ENCODE measurements at regions of chr4 and their contacts with region 1.

Region 1: GRCh38 chr4:24433515-24434214 is 150.7 kb downstream of the DHX15 start:
- DNase-seq: no peak
- ATAC-seq: no peak
- H3K4me3 ChIP-seq: no peak overlapping the region
- H3K27ac ChIP-seq: no peak overlapping the region
- H3K4me1 ChIP-seq: no peaks in the 10 kb centered on the region
- H3K27me3 ChIP-seq: peaks cover 15% of the 10 kb centered on the region
- CTCF ChIP-seq: no peak
- POLR2A ChIP-seq: no peak
- RAD21 ChIP-seq: no peak

Region 2: DNA sequence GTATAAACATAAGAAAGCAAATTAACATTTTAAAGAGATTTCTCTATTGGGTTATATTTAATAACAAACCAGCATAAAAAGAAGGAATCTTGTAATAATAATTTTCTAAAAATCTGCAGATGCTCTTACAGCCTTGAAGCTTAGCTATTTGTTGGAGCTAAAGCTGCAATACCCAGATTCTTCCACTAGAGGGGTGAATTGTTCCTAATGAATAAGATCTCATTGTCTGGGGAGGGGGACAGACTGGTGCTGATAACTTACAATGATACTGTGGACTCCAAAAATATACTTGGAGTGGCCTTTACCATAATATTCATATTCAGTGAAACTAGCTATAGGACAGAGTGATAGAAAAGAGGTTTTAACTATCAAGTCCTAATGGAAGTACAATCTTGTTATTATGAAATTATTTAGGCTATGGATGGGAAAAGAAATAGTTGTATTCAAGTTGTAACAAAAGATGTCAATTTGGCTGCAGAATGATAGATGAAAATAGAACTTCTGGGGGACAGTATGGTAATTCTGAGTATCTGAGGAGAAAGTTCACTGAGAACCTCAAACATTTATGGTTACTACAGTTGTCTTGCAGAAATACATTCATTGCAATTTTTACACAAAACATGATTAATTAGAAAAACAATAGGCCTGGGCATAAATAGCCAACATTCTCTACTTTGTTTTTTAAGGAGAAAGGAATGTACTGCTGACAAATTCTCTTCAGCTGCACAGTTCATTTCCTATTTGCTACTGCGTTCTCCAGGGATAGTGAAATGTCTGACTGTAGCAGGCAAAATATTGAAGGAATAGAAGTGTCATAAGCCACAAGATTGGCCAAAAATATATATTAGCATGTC is 1297.6 kb before region 1 on chr4:
- CTCF ChIA-PET with region 1: no interaction called
- POLR2A ChIA-PET with region 1: no interaction called
- dilution Hi-C with region 1: no loop called
- in situ Hi-C with region 1: loop called (anchors 25 kb)
- intact Hi-C with region 1: no loop called
- DNase-seq: peak; percentile 41
- ATAC-seq: 0 out of 2 replicates have a peak, but pooled peaks have one; percentile 46
- H3K4me3 ChIP-seq: no peak overlapping the region
- H3K27ac ChIP-seq: no peak overlapping the region
- H3K4me1 ChIP-seq: no peaks in the 10 kb centered on the region
- H3K27me3 ChIP-seq: no peaks in the 10 kb centered on the region
- CTCF ChIP-seq: peak; percentile 51
- POLR2A ChIP-seq: no peak
- RAD21 ChIP-seq: peak; percentile 42

Region 3: GRCh38 chr4:24117975-24118374 is 315.7 kb before region 1 on chr4:
- CTCF ChIA-PET with region 1: no interaction called
- POLR2A ChIA-PET with region 1: no interaction called
- dilution Hi-C with region 1: no loop called
- in situ Hi-C with region 1: no loop called
- intact Hi-C with region 1: no loop called
- DNase-seq: peak; percentile 28
- ATAC-seq: no peak
- H3K4me3 ChIP-seq: no peak overlapping the region
- H3K27ac ChIP-seq: no peak overlapping the region
- H3K4me1 ChIP-seq: peaks cover 2% of the 10 kb centered on the region; the same call in 1 of the 2 replicates
- H3K27me3 ChIP-seq: no peaks in the 10 kb centered on the region
- CTCF ChIP-seq: no peak
- POLR2A ChIP-seq: no peak
- RAD21 ChIP-seq: no peak

Region 4: GRCh38 chr4:24160358-24160757 is 273.3 kb before region 1 on chr4:
- CTCF ChIA-PET with region 1: no interaction called
- POLR2A ChIA-PET with region 1: no interaction called
- dilution Hi-C with region 1: no loop called
- in situ Hi-C with region 1: no loop called
- intact Hi-C with region 1: no loop called
- DNase-seq: no peak
- ATAC-seq: no peak
- H3K4me3 ChIP-seq: no peak overlapping the region
- H3K27ac ChIP-seq: no peak overlapping the region
- H3K4me1 ChIP-seq: no peaks in the 10 kb centered on the region
- H3K27me3 ChIP-seq: no peaks in the 10 kb centered on the region
- CTCF ChIP-seq: no peak
- POLR2A ChIP-seq: no peak
- RAD21 ChIP-seq: no peak

Region 5: DNA sequence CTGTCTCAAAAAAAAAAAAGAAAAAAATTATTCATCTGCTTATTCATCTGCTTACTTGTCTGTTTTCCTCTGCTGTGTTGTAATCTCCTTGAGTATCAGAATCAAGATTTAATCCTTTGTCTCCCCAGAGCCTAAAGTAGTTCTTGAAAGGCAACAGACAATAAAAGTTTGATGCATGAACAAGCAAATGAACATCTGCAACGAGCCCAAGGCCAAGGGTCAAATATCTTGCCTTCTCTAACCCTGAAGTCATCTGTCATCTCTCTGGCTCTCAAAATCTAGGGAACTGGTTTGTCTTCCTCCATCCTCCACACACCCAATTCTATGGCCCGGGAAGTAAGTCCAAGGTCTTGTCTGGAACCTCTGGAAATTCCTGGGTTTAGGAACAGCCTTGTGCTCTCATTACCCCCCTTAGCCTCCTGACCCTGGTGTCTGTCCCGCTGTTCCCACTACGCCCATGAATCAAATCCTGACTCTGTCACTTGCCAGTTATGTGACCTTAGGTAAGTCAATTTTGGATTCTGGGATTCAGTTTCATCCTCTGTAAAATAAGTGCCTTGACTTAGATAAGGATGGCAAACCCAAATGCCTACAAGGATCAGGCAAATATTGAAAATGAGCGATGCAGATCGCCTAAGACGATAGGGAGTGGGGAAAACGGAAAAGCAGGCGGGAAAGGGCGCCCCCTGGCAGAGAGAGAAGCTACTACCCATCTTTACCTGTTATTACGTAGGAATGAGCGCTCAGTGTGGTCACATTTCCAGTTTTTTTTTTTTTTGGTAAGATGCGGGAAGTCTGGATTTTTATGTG is 253.4 kb after region 1 on chr4:
- CTCF ChIA-PET with region 1: no interaction called
- POLR2A ChIA-PET with region 1: no interaction called
- dilution Hi-C with region 1: no loop called
- in situ Hi-C with region 1: no loop called
- intact Hi-C with region 1: no loop called
- DNase-seq: no peak
- ATAC-seq: no peak
- H3K4me3 ChIP-seq: no peak overlapping the region
- H3K27ac ChIP-seq: no peak overlapping the region
- H3K4me1 ChIP-seq: peaks cover 3% of the 10 kb centered on the region; the same call in 1 of the 2 replicates
- H3K27me3 ChIP-seq: peaks cover 7% of the 10 kb centered on the region
- CTCF ChIP-seq: peak; percentile 35
- POLR2A ChIP-seq: no peak
- RAD21 ChIP-seq: peak; percentile 48

Region 6: DNA sequence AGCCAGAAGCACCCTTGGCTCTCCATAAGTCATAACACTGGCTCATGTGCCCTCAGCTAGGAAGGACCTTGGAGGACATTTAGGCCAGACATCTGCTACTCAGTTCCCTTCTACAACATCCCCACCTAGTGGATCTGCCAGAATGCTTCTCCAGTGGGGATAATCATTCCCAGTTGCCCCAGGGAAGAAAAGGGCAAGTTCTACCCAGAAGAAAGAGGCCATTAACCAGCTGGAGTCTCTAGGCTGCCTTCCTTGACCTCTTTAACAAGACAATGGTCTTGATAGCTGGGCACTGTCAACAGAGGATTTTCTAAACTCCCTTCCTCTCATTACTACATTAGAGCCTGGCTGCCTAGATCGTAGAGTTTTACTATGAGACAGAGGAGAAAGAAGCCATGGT is 555.1 kb after region 1 on chr4:
- CTCF ChIA-PET with region 1: no interaction called
- POLR2A ChIA-PET with region 1: no interaction called
- dilution Hi-C with region 1: no loop called
- in situ Hi-C with region 1: no loop called
- intact Hi-C with region 1: no loop called
- DNase-seq: peak; percentile 51
- ATAC-seq: peak; percentile 85
- H3K4me3 ChIP-seq: no peak overlapping the region
- H3K27ac ChIP-seq: no peak overlapping the region
- H3K4me1 ChIP-seq: no peaks in the 10 kb centered on the region
- H3K27me3 ChIP-seq: peaks cover 6% of the 10 kb centered on the region
- CTCF ChIP-seq: peak; percentile 64
- POLR2A ChIP-seq: no peak
- RAD21 ChIP-seq: peak; percentile 76